Dorsolateral prefrontal cortex (tissue), 120 donors: ENCODE measurements at regions of chr12 and their contacts with region 1.

Region 1: DNA sequence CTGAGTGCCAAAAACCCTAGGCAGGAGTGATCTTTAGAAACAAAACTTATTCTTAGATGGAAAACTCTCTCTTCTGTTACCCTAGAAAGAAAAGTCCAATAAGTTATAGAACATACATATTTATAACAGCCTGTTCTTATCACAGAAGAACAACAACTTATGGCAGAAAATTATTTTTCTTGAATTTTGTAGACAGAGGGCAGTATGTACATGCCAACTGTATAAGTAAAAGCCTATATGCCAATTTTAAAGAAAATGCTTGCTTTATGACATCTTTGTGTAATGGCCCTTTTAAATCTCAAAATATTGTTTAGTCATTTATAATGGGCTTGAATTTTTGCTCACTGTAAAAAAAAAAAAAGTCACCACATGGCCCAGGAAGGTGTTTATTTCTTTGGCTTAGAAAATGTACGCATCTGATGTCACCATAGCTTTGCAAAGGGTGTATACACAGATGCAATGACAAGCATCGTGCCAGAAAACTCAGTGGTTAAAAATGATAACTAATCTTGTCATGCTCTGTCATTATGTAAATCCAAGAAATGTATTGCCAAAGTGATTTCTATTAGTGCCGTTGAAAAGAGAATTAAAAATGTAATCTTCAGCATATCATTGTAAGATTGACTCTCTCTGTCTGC is 38.3 kb upstream of the GRIP1 start:
- DNase-seq: no peak
- H3K4me3 ChIP-seq: no peak overlapping the region
- H3K27ac ChIP-seq: no peak overlapping the region
- H3K27me3 ChIP-seq: no peaks in the 10 kb centered on the region
- CTCF ChIP-seq: peak in 20 of 56 donors; percentile 8 to 40 (median 20)

Region 2: DNA sequence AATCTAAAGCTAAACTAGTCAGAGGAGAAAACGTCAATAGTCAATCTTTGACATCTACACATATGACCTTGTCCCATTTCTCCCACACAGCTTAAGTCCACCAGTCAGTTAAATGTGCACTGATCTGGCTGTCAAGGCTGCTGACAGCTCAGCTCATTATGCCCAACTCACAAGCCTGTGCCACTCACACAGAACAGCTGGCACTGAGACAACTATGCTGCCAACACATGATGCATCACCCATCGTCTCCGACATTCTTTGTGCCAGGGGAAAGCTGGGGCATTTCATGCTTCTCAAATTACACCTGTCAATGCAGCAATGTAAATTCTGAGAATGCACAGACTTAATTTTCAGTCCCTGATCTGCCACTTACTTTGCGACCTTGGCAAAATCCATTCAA is 1983.3 kb before region 1 on chr12:
- intact Hi-C with region 1: no loop called
- DNase-seq: peak in 8 of 10 donors; percentile 57 to 86 (median 66)
- H3K4me3 ChIP-seq: no peak overlapping the region
- H3K27ac ChIP-seq: peak overlapping the region in 17 of 59 donors; percentile 2 to 62 (median 24)
- H3K27me3 ChIP-seq: no peaks in the 10 kb centered on the region
- CTCF ChIP-seq: no peak

Region 3: DNA sequence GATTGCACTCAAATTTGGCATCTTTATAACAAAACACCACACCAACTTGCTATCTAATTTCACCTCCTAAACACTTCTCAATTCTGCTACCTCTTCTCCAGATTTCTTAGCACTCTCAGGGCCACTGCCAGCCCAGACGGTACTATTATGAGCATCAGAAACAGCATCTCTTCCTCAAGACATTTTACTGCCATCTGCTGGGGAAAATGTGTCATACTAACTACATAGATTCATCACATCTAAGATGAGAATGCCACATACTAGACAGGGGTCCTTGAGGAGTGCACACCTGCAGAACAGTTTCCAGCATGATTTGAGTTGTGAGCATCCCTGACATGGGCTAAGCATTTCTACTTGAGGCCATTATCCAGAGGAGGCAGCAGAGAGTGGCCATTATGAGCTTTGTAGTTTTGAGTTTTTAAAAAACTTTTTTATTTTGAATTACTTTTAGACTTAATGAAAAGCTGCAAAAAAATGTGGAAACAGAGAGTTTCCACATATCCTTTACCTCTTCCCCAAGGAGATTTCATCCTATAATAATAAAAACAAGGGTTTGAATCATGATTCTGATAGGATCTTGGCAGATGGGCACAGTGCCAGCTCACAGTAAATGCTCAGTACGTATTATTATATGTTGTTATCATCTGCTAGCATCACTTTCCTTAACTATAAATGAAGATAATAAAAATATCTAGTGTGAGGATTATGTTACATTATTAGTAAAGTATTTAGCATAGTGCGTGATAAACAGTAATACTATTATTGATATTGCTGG is 23.1 kb before region 1 on chr12:
- intact Hi-C with region 1: no loop called
- DNase-seq: peak in 3 of 10 donors; percentile 6 to 35 (median 32)
- H3K4me3 ChIP-seq: no peak overlapping the region
- H3K27ac ChIP-seq: no peak overlapping the region
- H3K27me3 ChIP-seq: no peaks in the 10 kb centered on the region
- CTCF ChIP-seq: peak; percentile 56 to 87 (median 75)

Region 4: GRCh38 chr12:66860752-66861750 is 143.9 kb after region 1 on chr12:
- intact Hi-C with region 1: loop called in 1 of 2 experiments (anchors 10 kb)
- DNase-seq: peak; percentile 23 to 77 (median 63)
- H3K4me3 ChIP-seq: no peak overlapping the region
- H3K27ac ChIP-seq: no peak overlapping the region
- H3K27me3 ChIP-seq: peaks cover 0 to 3% (median 0%) of the 10 kb centered on the region in 45 donors
- CTCF ChIP-seq: peak; percentile 78 to 97 (median 89)

Region 5: DNA sequence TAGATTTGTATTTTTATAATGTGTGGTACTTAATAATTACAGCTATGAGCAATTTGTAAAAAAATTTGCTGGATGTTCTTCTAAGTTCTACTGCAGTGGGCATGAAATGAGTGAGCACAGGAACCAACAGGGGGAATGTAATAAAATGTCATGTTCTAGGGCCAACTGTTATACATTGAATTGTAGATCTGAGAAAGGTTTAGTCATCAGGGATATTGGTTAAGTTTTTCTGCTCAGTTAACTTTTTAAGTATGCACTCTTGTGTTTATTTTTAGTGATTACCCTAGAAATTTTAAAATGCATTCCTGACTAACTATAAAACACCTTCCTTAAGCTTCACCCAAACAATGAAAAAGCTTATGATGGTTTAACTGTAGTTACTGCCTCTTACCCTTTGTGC is 653.8 kb after region 1 on chr12:
- intact Hi-C with region 1: no loop called
- DNase-seq: no peak
- H3K4me3 ChIP-seq: no peak overlapping the region
- H3K27ac ChIP-seq: no peak overlapping the region
- H3K27me3 ChIP-seq: no peaks in the 10 kb centered on the region
- CTCF ChIP-seq: no peak